ENCODE measurements at regions of chr3 and their contacts with region 1.

Region 1: DNA sequence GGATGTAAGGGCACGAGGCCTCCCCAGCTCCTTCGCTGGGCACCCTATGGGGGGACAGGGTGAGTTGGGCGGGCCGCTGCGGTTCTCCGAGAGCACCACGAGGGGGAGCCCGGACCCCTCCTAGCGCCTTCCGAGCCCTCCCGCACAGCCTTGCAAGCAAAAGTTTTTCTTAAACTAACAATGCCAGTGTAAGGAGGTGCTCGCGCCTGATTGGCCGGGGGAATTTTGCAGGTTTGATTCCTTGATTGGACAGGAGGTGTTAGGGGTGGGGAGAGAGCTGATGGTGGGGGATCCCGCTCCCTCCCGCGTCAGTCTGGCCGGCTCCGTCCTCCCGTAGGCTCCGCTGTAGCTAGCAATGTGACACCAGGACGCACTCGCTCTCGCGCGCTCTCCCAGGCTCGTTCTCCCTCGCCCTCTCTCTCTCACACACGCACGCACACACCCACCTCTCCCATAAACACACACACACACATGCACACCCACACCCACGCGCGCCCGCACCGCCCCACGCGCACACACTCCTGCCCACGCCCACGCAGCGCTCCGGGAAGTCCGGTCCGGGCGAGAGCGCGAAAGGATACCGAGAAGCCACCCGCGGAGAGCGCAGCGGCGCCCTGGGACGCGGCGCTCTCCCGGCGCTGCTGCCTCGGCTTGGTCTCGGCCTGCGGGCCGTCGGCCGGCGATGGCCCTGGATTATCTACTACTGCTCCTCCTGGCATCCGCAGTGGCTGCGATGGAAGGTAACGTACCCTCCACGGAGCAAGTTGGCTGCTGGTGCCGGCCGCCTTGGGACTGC is at the start of gene EPHB1:
- DNase-seq: peak; percentile 92
- H3K4me3 Mint-ChIP-seq: peak within 1 kb of the TSS; percentile 91
- H3K27ac Mint-ChIP-seq: peak within 1 kb of the TSS; percentile 26
- H3K4me1 Mint-ChIP-seq: peaks cover 14% of the 10 kb centered on the region
- H3K27me3 Mint-ChIP-seq: peaks cover 89% of the 10 kb centered on the region
- CTCF ChIP-seq: peak; percentile 99
- total RNA-seq, gene EPHB1: 0.73 and 0.81 TPM in 2 replicates

Region 2: DNA sequence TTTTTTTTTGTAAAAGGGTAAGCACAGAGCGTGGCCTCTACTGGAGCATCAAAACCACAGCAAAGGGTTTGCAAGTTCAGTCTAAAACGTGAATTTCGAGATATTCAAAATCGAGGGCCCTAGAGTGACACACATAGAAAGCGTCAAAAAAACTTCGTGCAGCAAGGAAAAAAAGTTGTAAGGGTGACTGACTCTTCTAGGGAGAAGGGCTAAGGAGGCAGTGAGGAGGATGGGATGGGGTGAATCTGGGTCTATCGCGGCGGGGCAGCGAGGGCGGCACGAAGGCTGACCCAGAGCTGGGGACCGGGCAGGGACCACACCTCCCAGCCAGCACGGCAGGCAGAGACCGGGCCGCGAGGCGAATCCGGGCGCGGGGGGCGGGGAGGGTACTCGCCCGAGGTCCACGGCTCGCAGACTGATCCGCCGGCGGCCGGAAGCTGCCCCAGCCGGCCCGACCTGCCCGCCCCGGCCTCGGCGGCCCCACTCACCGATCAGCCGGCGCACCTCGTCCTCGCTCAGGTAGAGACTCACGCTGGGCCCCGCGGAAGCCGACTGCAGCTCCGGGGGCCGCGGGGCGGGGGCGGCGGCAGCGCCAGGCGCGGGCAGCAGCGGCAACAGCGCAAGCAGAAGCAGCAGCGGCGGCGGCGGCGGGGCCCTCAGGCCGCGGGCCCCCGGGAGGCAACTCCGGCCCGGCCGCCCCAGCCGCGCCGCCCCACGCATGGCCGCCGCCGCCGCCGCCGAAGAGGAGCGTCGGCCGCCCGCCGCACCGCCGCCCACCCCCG is 545.0 kb before region 1 on chr3:
- CTCF ChIA-PET with region 1: no interaction called
- intact Hi-C with region 1: no loop called
- DNase-seq: peak; percentile 86
- H3K4me3 Mint-ChIP-seq: peak overlapping the region; percentile 95
- H3K27ac Mint-ChIP-seq: peak overlapping the region; percentile 97
- H3K4me1 Mint-ChIP-seq: peaks cover 44% of the 10 kb centered on the region
- H3K27me3 Mint-ChIP-seq: no peaks in the 10 kb centered on the region
- CTCF ChIP-seq: no peak

Region 3: GRCh38 chr3:134618478-134619300 is 176.5 kb before region 1 on chr3:
- CTCF ChIA-PET with region 1: no interaction called
- intact Hi-C with region 1: no loop called
- DNase-seq: no peak
- H3K4me3 Mint-ChIP-seq: no peak overlapping the region
- H3K27ac Mint-ChIP-seq: no peak overlapping the region
- H3K4me1 Mint-ChIP-seq: no peaks in the 10 kb centered on the region
- H3K27me3 Mint-ChIP-seq: peaks cover 35% of the 10 kb centered on the region
- CTCF ChIP-seq: no peak

Region 4: GRCh38 chr3:135240426-135240825 is 445.3 kb after region 1 on chr3:
- CTCF ChIA-PET with region 1: interaction called, 6 read pairs
- intact Hi-C with region 1: loop called (anchors 5 kb)
- DNase-seq: no peak
- H3K4me3 Mint-ChIP-seq: no peak overlapping the region
- H3K27ac Mint-ChIP-seq: no peak overlapping the region
- H3K4me1 Mint-ChIP-seq: no peaks in the 10 kb centered on the region
- H3K27me3 Mint-ChIP-seq: peaks cover 13% of the 10 kb centered on the region
- CTCF ChIP-seq: no peak

Region 5: GRCh38 chr3:135503760-135504686 is 708.9 kb after region 1 on chr3:
- CTCF ChIA-PET with region 1: interaction called, 44 read pairs
- intact Hi-C with region 1: loop called (anchors 1 kb)
- DNase-seq: peak; percentile 91
- H3K4me3 Mint-ChIP-seq: no peak overlapping the region
- H3K27ac Mint-ChIP-seq: no peak overlapping the region
- H3K4me1 Mint-ChIP-seq: peaks cover 8% of the 10 kb centered on the region
- H3K27me3 Mint-ChIP-seq: peaks cover 78% of the 10 kb centered on the region
- CTCF ChIP-seq: peak; percentile 54